ENCODE measurements at regions of chr12 and their contacts with region 1.

Region 1: GRCh38 chr12:15584366-15585041 is 204.7 kb downstream of the EPS8 start:
- DNase-seq: no peak
- ATAC-seq: peak; percentile 62; the same call in 1 of the 2 replicates
- H3K4me3 Mint-ChIP-seq: no peak overlapping the region
- H3K27ac Mint-ChIP-seq: no peak overlapping the region
- H3K4me1 Mint-ChIP-seq: peaks cover 14% of the 10 kb centered on the region
- H3K27me3 Mint-ChIP-seq: no peaks in the 10 kb centered on the region; the same call in none of the 2 replicates
- CTCF ChIP-seq: 0 out of 2 replicates have a peak, but pooled peaks have one; percentile 18

Region 2: DNA sequence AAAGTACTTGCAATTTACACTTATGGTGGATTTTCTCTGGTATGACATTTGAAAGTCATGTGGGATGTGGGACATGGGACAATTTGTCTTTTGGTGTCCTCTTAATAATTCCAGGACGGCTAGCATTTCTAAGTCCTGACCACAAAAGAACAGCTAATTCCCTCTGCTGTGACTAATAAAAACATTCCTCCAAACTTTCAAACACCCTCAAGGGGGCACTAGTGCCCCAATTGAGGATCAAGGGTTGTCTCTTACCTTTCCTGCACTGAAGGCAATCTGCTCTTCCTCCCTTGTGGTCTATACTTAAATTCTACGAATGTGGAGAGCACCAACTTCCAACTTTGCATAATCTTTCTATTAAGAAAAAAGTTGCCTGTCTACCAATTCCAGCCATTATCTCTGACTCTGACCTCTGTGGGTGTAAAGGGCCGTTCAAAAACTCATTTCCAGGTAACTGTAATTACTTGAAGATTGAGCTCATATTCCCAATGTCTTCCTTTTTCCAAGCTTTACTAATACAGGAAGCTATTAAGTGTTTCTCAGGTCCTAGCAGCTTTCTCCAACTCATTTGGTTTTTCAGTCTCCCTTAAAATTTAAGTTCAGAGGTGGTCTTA is 52.0 kb before region 1 on chr12:
- CTCF ChIA-PET with region 1: interaction called, 85 read pairs
- POLR2A ChIA-PET with region 1: interaction called, 3 read pairs
- DNase-seq: peak; percentile 51
- ATAC-seq: peak; percentile 93
- H3K4me3 Mint-ChIP-seq: no peak overlapping the region
- H3K27ac Mint-ChIP-seq: no peak overlapping the region
- H3K4me1 Mint-ChIP-seq: 0 out of 2 replicates have a peak, but pooled peaks cover under 1% of the 10 kb centered on the region
- H3K27me3 Mint-ChIP-seq: no peaks in the 10 kb centered on the region
- CTCF ChIP-seq: peak; percentile 37; the same call in 1 of the 2 replicates

Region 3: GRCh38 chr12:15556411-15557102 is 27.9 kb before region 1 on chr12:
- CTCF ChIA-PET with region 1: interaction called, 25 read pairs
- POLR2A ChIA-PET with region 1: no interaction called
- DNase-seq: no peak
- ATAC-seq: no peak
- H3K4me3 Mint-ChIP-seq: no peak overlapping the region
- H3K27ac Mint-ChIP-seq: no peak overlapping the region
- H3K4me1 Mint-ChIP-seq: no peaks in the 10 kb centered on the region
- H3K27me3 Mint-ChIP-seq: no peaks in the 10 kb centered on the region
- CTCF ChIP-seq: no peak

Region 4: DNA sequence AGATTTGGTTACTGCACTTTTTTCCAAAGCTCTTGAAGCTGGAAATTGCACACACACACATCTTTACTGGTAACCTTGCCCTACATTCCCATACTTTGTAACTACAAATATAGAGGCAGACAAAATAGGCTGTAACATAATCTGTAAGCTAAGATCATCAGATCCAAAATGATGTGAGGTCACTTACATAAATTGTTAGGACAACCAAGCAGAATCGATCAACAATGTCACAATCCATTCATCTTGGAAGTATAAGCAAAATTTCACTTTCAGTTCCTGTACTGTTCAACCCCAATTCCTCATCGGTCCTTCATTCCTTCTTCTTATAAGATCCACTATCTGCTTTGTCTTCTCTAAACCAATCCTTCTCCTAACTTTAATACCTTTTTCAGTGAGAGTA is 132.1 kb after region 1 on chr12:
- CTCF ChIA-PET with region 1: no interaction called
- POLR2A ChIA-PET with region 1: no interaction called
- DNase-seq: no peak
- ATAC-seq: no peak
- H3K4me3 Mint-ChIP-seq: no peak overlapping the region
- H3K27ac Mint-ChIP-seq: no peak overlapping the region
- H3K4me1 Mint-ChIP-seq: no peaks in the 10 kb centered on the region
- H3K27me3 Mint-ChIP-seq: no peaks in the 10 kb centered on the region
- CTCF ChIP-seq: no peak

Region 5: GRCh38 chr12:15856097-15856982 is 271.8 kb after region 1 on chr12:
- CTCF ChIA-PET with region 1: interaction called, 38 read pairs
- POLR2A ChIA-PET with region 1: no interaction called
- DNase-seq: no peak
- ATAC-seq: peak; percentile 26; the same call in 1 of the 2 replicates
- H3K4me3 Mint-ChIP-seq: no peak overlapping the region
- H3K27ac Mint-ChIP-seq: no peak overlapping the region
- H3K4me1 Mint-ChIP-seq: peaks cover 6% of the 10 kb centered on the region; the same call in 1 of the 2 replicates
- H3K27me3 Mint-ChIP-seq: no peaks in the 10 kb centered on the region
- CTCF ChIP-seq: peak; percentile 58

Measured in WTC11 (cell line).